Activated CD4-positive, alpha-beta T cell treated with anti-CD3 and anti-CD28 coated beads, Interleukin-2, amount 10 ng/mL, durations not matched to agents 24 days and 14 days (primary cell): ENCODE measurements at regions of chr10 and their contacts with region 1.

Region 1: GRCh38 chr10:103759100-103759781 is 96.1 kb downstream of the SH3PXD2A start:
- DNase-seq: peak; percentile 76
- H3K4me3 Mint-ChIP-seq: peak overlapping the region; percentile 67
- H3K27ac Mint-ChIP-seq: peak overlapping the region; percentile 85
- H3K4me1 Mint-ChIP-seq: peaks cover 57% of the 10 kb centered on the region
- H3K27me3 Mint-ChIP-seq: peaks cover 14% of the 10 kb centered on the region

Region 2: DNA sequence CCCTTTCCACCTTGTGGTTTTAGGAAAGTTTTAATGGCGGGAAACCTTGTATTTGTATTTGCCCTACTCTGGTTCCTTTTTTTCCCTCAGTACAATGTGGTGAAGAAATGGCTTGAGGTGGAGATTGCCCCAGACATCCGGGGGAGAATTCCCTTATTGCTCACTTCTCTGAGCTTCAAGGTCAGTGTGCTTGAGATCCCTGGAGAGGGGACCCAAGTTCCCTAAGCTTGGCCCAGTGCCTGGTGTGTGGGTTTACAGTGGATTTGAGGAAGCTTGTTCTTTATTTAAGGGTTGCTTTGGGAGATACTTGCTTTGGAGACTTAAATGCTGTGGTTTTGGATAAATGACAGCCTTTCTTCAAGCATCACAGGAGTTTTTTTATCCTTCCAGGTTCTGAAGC is 325.4 kb before region 1 on chr10:
- intact Hi-C with region 1: no loop called
- DNase-seq: no peak
- H3K4me3 Mint-ChIP-seq: no peak overlapping the region
- H3K27ac Mint-ChIP-seq: no peak overlapping the region
- H3K4me1 Mint-ChIP-seq: peaks cover 28% of the 10 kb centered on the region
- H3K27me3 Mint-ChIP-seq: no peaks in the 10 kb centered on the region

Region 3: GRCh38 chr10:103504181-103504783 is 255.0 kb before region 1 on chr10:
- intact Hi-C with region 1: no loop called
- DNase-seq: peak; percentile 84
- H3K4me3 Mint-ChIP-seq: peak overlapping the region; percentile 53
- H3K27ac Mint-ChIP-seq: peak overlapping the region; percentile 59
- H3K4me1 Mint-ChIP-seq: peaks cover 31% of the 10 kb centered on the region
- H3K27me3 Mint-ChIP-seq: peaks cover 59% of the 10 kb centered on the region

Region 4: GRCh38 chr10:103745341-103746227 is 13.7 kb before region 1 on chr10:
- intact Hi-C with region 1: loop called (anchors 1 kb)
- DNase-seq: peak; percentile 82
- H3K4me3 Mint-ChIP-seq: peak overlapping the region; percentile 54
- H3K27ac Mint-ChIP-seq: peak overlapping the region; percentile 93
- H3K4me1 Mint-ChIP-seq: peaks cover 51% of the 10 kb centered on the region
- H3K27me3 Mint-ChIP-seq: no peaks in the 10 kb centered on the region

Region 5: DNA sequence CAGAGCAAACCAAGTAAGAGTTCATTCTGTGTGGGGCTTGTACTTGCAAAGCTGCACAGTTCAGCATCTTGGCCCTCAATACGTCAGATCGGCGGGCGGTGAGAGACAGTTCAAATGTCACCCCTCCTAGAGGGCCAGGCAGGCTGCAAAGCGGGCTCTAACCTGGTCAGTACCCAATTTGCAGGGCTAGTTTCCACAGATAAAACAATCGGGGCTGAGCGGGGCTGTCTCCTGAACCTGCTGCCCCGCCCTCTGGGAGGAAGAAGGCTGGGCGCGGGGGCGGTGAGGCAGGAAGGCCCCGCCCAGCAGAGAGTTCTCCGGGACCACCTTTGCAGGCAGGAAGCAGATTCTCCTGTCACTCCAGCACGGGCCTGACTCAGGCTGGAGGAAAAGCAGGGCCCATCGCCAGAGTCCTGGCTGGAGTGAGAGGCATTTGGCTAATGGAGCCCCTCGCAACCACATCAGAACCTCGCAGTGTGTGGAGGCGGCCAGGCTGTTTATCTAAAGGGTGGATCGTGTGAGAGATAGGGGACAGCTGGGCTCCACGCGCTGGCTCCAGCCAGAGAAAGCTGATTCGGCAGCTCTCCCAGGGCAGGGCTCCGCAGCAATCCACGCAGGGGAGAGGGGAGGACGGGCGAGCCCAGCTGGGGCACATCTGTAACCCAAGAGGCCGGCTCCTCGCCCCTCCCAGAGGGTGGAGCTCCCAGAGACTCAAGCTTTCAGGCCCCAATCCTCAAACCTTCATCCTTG is 13.0 kb after region 1 on chr10:
- intact Hi-C with region 1: loop called (anchors 2 kb)
- DNase-seq: peak; percentile 89
- H3K4me3 Mint-ChIP-seq: peak overlapping the region; percentile 93
- H3K27ac Mint-ChIP-seq: peak overlapping the region; percentile 86
- H3K4me1 Mint-ChIP-seq: peaks cover 21% of the 10 kb centered on the region
- H3K27me3 Mint-ChIP-seq: peaks cover 11% of the 10 kb centered on the region

Region 6: GRCh38 chr10:103800789-103801540 is 41.7 kb after region 1 on chr10:
- intact Hi-C with region 1: loop called (anchors 5 kb)
- DNase-seq: peak; percentile 89
- H3K4me3 Mint-ChIP-seq: peak overlapping the region; percentile 34
- H3K27ac Mint-ChIP-seq: peak overlapping the region; percentile 74
- H3K4me1 Mint-ChIP-seq: peaks cover 28% of the 10 kb centered on the region
- H3K27me3 Mint-ChIP-seq: peaks cover 4% of the 10 kb centered on the region

Region 7: DNA sequence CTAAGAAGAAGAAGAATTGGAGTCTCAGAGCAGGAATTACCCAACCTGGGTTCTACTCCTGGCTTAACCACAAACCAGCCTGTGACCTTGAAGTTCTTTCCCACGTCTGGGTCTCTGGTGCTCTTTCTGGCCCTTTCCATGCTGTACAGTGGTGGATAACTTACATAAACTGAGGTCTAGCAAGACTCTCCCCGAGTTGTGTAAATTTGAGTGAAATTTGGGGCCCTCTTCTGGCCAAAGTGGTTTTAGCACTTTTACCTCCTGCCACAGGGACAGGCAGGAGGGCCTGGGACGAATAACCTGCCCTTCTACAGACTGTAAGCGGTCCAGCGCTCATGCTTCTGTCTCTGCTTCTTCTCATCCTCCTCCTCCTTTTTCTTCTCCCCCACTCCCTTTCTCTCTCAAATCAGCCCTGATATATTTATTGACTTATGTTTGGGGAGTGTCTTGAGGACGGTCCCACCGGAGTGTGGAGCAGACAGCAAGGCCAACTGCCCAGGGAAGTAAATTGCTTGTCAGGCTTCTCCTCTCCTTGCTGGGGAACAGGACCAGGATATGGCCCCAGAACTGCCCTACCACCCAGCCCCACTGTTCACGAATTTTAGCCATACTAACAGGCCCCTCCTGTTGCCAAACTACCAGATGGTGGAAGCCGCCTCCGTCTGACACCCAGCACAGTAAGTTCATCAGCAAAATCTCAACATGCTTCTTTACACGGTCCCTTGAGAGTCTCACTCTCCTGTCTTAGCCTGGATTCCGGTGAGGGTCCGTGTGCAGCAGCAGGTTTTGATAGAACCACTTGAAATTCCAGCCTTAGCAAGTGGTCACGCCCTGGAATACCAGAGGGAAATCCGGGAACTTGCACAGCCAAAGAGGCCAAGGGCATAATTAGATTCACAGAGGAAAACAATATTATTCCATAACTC is 100.2 kb after region 1 on chr10:
- intact Hi-C with region 1: loop called (anchors 5 kb)
- DNase-seq: peak; percentile 89
- H3K4me3 Mint-ChIP-seq: no peak overlapping the region
- H3K27ac Mint-ChIP-seq: no peak overlapping the region
- H3K4me1 Mint-ChIP-seq: peaks cover 6% of the 10 kb centered on the region
- H3K27me3 Mint-ChIP-seq: peaks cover 45% of the 10 kb centered on the region